Activated CD8-positive, alpha-beta T cell treated with anti-CD3 and anti-CD28 coated beads for 36 hours (primary cell): ENCODE measurements at regions of chr2 and their contacts with region 1.

Region 1: GRCh38 chr2:20642055-20642971 is 8.6 kb downstream of the HS1BP3 start:
- DNase-seq: peak; percentile 80
- ATAC-seq: peak; percentile 99
- H3K4me3 Mint-ChIP-seq: no peak overlapping the region
- H3K27ac Mint-ChIP-seq: no peak overlapping the region
- H3K4me1 Mint-ChIP-seq: no peaks in the 10 kb centered on the region
- H3K27me3 Mint-ChIP-seq: no peaks in the 10 kb centered on the region
- CTCF ChIP-seq: peak; percentile 90

Region 2: GRCh38 chr2:20403774-20404312 is 238.5 kb before region 1 on chr2:
- CTCF ChIA-PET with region 1: interaction called, 45 read pairs
- POLR2A ChIA-PET with region 1: no interaction called
- intact Hi-C with region 1: no loop called
- DNase-seq: no peak
- ATAC-seq: no peak
- H3K4me3 Mint-ChIP-seq: no peak overlapping the region
- H3K27ac Mint-ChIP-seq: no peak overlapping the region
- H3K4me1 Mint-ChIP-seq: no peaks in the 10 kb centered on the region
- H3K27me3 Mint-ChIP-seq: peaks cover 1% of the 10 kb centered on the region
- CTCF ChIP-seq: no peak

Region 3: GRCh38 chr2:20411361-20411894 is 230.9 kb before region 1 on chr2:
- CTCF ChIA-PET with region 1: interaction called, 45 read pairs
- POLR2A ChIA-PET with region 1: no interaction called
- intact Hi-C with region 1: no loop called
- DNase-seq: peak; percentile 89
- ATAC-seq: peak; percentile 100
- H3K4me3 Mint-ChIP-seq: no peak overlapping the region
- H3K27ac Mint-ChIP-seq: no peak overlapping the region
- H3K4me1 Mint-ChIP-seq: no peaks in the 10 kb centered on the region
- H3K27me3 Mint-ChIP-seq: peaks cover 9% of the 10 kb centered on the region
- CTCF ChIP-seq: peak; percentile 69

Region 4: DNA sequence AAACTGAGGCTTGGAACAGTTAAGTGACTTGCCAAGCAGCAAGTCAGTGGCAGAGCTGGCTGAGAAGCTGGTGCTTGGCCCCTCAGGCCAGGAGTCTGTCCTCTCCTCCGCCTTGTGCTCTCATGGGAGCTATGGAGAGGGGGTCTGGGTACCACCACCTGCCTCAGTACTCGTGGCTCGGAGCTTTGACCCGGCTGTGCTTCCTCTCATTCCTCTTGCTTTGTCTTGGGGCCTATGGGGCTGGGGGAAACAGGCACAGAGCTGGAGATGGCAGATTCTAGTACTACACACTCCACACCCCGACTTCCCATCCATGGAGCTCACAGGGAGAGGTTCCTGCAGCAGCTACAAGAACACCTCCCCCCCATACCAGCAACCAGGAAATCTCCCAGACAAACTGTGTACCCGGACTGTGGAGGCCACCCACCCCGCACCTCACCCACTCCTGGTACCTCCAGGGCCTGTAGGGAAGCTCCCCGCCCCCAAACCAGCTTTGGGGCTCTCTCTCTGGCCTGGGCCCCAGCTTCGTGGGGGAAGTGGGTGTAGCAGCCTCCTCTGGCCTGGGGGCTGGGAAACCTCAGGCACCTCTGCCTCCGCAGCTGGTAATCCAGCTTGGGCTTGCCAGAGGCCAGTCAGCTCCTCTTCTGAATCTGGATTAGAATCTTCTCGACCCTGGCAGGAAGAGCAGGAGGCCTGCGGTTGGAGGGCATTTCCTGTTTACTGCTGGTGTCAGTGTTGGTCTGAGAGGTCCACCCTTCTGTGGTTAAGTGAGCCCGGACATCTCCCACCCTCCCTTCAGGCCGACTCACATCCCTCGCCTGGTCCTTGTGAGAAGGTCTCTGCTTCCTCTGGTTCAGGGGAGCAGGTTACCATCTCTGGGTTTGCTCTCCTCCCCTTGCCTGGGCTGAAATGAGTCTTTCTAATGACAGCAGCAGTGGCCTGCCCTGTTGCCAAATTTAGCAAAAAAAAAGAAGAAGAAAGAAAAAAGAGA is 217.7 kb before region 1 on chr2:
- CTCF ChIA-PET with region 1: interaction called, 18 read pairs
- POLR2A ChIA-PET with region 1: no interaction called
- intact Hi-C with region 1: no loop called
- DNase-seq: peak; percentile 41
- ATAC-seq: peak; percentile 63
- H3K4me3 Mint-ChIP-seq: no peak overlapping the region
- H3K27ac Mint-ChIP-seq: peak overlapping the region; percentile 17
- H3K4me1 Mint-ChIP-seq: peaks cover 14% of the 10 kb centered on the region
- H3K27me3 Mint-ChIP-seq: no peaks in the 10 kb centered on the region
- CTCF ChIP-seq: no peak

Region 5: GRCh38 chr2:20438334-20439192 is 203.8 kb before region 1 on chr2:
- CTCF ChIA-PET with region 1: interaction called, 117 read pairs
- POLR2A ChIA-PET with region 1: no interaction called
- intact Hi-C with region 1: no loop called
- DNase-seq: no peak
- ATAC-seq: no peak
- H3K4me3 Mint-ChIP-seq: no peak overlapping the region
- H3K27ac Mint-ChIP-seq: no peak overlapping the region
- H3K4me1 Mint-ChIP-seq: no peaks in the 10 kb centered on the region
- H3K27me3 Mint-ChIP-seq: peaks cover 11% of the 10 kb centered on the region
- CTCF ChIP-seq: no peak

Region 6: GRCh38 chr2:20446917-20447436 is 195.3 kb before region 1 on chr2 and contains the start of gene RHOB:
- CTCF ChIA-PET with region 1: interaction called, 117 read pairs
- POLR2A ChIA-PET with region 1: interaction called, 6 read pairs
- intact Hi-C with region 1: loop called (anchors 2 kb)
- DNase-seq: peak; percentile 95
- ATAC-seq: peak; percentile 99
- H3K4me3 Mint-ChIP-seq: peak within 1 kb of the TSS; percentile 80
- H3K27ac Mint-ChIP-seq: peak within 1 kb of the TSS; percentile 64
- H3K4me1 Mint-ChIP-seq: peaks cover 8% of the 10 kb centered on the region
- H3K27me3 Mint-ChIP-seq: peaks cover 4% of the 10 kb centered on the region
- CTCF ChIP-seq: no peak
- total RNA-seq, gene RHOB: 14.2 to 15.4 TPM

Region 7: DNA sequence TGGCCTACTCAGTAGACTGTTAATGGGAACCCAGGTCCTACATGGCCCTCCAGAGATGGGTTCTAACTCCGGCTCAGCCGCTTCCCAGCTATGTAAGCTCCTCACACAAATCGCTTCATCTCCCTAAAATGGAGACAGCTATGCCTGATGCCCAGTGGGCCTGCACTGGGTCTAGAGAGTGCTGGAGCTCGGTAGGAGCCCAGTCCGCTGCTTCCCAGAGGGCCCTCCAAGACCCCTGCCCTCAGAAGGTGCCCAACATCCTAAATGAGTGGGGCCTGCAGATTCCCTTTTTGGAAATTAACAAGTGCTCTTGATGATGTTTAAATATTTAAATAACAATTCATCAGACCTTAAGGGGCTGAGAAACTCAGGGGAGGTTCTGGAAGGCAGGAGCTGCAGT is 38.5 kb before region 1 on chr2:
- CTCF ChIA-PET with region 1: interaction called, 10 read pairs
- POLR2A ChIA-PET with region 1: no interaction called
- intact Hi-C with region 1: no loop called
- DNase-seq: no peak
- ATAC-seq: no peak
- H3K4me3 Mint-ChIP-seq: no peak overlapping the region
- H3K27ac Mint-ChIP-seq: no peak overlapping the region
- H3K4me1 Mint-ChIP-seq: no peaks in the 10 kb centered on the region
- H3K27me3 Mint-ChIP-seq: no peaks in the 10 kb centered on the region
- CTCF ChIP-seq: no peak

Region 8: DNA sequence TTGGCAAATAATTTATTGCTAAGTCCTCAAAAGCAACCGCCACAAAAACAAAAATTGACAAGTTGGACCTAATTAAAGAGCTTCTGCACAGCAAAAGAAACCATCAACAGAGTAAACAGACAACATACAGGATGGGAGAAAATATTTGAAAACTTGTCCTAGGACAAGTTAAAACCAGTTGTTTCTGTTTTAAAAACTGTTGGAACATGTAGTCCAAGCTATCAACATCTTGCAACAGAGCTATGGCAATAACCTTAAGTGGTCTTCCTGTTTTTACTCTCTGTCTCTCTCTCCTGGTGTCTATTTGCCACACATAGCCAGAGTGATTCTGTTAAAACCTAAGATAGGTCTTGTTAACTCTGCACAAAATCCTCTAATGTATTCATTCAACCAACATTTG is 245.9 kb after region 1 on chr2:
- CTCF ChIA-PET with region 1: no interaction called
- POLR2A ChIA-PET with region 1: no interaction called
- intact Hi-C with region 1: no loop called
- DNase-seq: no peak
- ATAC-seq: no peak
- H3K4me3 Mint-ChIP-seq: no peak overlapping the region
- H3K27ac Mint-ChIP-seq: no peak overlapping the region
- H3K4me1 Mint-ChIP-seq: no peaks in the 10 kb centered on the region
- H3K27me3 Mint-ChIP-seq: peaks cover 7% of the 10 kb centered on the region
- CTCF ChIP-seq: no peak

Region 9: GRCh38 chr2:20916604-20917286 is 274.4 kb after region 1 on chr2:
- CTCF ChIA-PET with region 1: no interaction called
- POLR2A ChIA-PET with region 1: no interaction called
- intact Hi-C with region 1: no loop called
- DNase-seq: no peak
- ATAC-seq: no peak
- H3K4me3 Mint-ChIP-seq: no peak overlapping the region
- H3K27ac Mint-ChIP-seq: no peak overlapping the region
- H3K4me1 Mint-ChIP-seq: no peaks in the 10 kb centered on the region
- H3K27me3 Mint-ChIP-seq: peaks cover 20% of the 10 kb centered on the region
- CTCF ChIP-seq: no peak